Psoas muscle (tissue), 8 donors: ENCODE measurements at regions of chr4 and their contacts with region 1.

Region 1: DNA sequence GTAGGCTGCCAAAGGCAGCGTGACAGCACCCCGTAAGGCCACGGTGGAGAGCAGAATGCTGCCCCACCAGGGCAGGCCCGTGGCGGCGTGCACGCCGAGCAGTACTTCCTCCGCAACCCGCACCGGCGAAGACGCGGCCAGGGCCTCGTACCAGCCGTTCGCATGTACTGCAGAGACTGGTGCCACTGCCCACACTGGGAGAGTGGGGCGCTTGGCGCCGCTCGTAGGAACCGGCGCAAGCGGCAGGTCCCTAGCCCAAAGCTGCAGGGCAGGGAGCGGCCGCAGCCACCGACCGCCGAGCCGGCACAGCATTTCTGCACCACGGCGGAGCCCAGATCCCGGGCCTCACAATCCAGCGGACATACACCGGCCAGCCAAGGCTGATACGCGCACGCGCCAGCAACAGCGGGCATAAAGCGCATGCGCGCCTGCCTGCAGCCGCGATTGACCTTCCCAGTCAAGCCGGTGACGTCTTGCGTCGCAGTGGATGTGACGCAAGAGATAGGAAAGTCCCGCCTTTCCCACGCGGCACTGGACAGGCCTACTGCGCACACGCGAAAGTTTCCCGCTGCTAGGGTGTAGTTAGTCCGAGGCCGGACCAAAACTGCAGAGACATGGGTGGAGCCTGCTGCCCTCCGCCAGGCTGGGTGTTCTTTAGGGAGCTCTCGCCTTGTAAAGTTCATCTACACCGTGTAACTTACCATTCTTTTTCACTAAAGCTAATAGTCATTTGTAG is at the start of gene COX18:
- DNase-seq: peak; percentile 97 to 99
- ATAC-seq: peak; percentile 92 to 97 (median 94)
- H3K4me3 ChIP-seq: peak within 1 kb of the TSS; percentile 89
- H3K27ac ChIP-seq: peak within 1 kb of the TSS; percentile 96
- H3K4me1 ChIP-seq: peaks cover 8% of the 10 kb centered on the region
- H3K27me3 ChIP-seq: no peaks in the 10 kb centered on the region
- CTCF ChIP-seq: no peak
- total RNA-seq, gene COX18: 5.8 to 9.2 (median 9.0) TPM

Region 2: GRCh38 chr4:73086095-73086868 is 16.8 kb after region 1 on chr4:
- intact Hi-C with region 1: no loop called
- DNase-seq: no peak
- ATAC-seq: no peak
- H3K4me3 ChIP-seq: no peak overlapping the region
- H3K27ac ChIP-seq: no peak overlapping the region
- H3K4me1 ChIP-seq: no peaks in the 10 kb centered on the region
- H3K27me3 ChIP-seq: no peaks in the 10 kb centered on the region
- CTCF ChIP-seq: no peak

Region 3: DNA sequence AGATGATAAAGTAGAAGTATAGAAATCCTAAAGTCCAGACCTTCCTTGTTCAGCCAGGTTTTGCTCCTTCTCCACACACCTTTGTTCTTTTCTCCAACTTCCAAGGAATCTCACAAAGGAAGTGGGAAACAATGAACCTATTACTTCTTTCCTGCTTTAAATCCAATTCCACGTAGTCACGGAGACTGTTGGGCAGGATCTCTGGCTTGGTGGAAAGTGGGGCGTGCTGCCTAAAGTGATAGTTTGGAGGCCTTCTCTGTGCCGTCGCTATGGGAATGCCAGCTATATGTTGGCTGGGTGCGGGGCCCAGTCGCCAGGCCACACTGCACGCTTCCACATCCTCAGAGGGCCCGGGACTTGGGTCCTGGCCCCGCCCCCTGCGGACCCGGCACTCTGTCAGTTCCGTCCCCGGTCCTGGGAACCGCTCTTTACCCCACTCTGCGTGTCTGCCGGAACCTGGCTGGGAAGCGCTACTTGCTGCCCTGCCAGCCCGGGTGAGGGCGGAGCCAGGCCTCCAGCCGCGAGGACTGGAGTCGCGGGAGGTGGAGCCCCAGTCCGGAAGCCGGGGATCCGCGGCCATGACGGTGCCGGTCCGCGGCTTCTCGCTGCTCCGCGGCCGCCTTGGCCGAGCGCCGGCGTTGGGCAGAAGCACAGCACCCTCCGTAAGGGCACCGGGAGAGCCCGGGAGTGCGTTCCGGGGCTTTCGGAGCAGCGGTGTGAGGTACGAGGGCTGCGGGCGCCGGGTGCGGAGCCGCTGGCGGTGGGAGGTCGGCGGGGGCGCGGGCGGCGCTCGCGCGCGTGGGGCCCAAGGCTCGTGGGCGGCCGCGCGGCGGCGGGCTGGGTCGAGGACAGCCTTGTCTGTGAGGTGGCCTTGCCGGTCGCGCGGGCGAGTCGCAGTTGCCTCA is 1088.3 kb after region 1 on chr4 and contains the start of gene MTHFD2L:
- intact Hi-C with region 1: loop called in 1 of 2 experiments (anchors 10 kb)
- DNase-seq: peak; percentile 95 to 97
- ATAC-seq: peak; percentile 98 to 99 (median 98)
- H3K4me3 ChIP-seq: peak within 1 kb of the TSS; percentile 69
- H3K27ac ChIP-seq: peak within 1 kb of the TSS; percentile 90
- H3K4me1 ChIP-seq: peaks cover 23% of the 10 kb centered on the region
- H3K27me3 ChIP-seq: no peaks in the 10 kb centered on the region
- CTCF ChIP-seq: no peak
- total RNA-seq, gene MTHFD2L: 6.4 to 10.4 (median 9.7) TPM